Colonic mucosa (tissue), 4 donors: ENCODE measurements at regions of chr12 and their contacts with region 1.

Region 1: DNA sequence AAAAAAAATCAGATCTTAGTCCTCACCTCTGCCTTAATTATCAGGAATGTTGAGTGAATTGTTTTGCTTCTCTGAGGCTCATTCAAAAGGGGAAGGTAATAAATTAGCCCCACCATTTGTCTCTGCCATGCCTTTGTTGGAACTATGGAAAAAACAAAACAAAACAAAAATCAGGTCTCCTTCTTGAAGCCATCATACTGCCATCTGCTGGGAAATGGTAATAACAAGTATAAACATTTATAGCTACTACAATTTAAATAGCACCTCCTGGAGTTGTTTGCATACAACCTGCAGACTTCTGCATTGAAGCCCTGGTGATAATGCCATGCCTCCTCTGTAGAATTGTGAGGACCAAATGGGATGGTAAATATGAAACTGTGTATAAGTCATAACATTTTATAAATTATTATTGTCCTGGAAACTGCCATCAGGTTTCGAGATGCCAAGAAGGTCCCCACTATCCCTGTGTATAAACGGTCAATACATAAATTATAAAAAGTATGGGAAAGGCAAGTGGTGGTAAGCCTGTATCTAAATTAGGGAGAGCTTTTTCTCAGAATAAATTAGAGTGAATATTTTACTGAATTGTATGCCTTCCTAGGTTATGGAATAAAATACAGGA is 87.2 kb upstream of the FGD4 start:
- DNase-seq: no peak
- H3K4me3 ChIP-seq: no peak overlapping the region
- H3K27ac ChIP-seq: no peak overlapping the region
- H3K4me1 ChIP-seq: no peaks in the 10 kb centered on the region
- H3K27me3 ChIP-seq: no peaks in the 10 kb centered on the region
- CTCF ChIP-seq: peak; percentile 33

Region 2: GRCh38 chr12:31650927-31651326 is 661.2 kb before region 1 on chr12:
- intact Hi-C with region 1: loop called (anchors 5 kb)
- DNase-seq: peak; percentile 65
- H3K4me3 ChIP-seq: no peak overlapping the region
- H3K27ac ChIP-seq: peak overlapping the region; percentile 45
- H3K4me1 ChIP-seq: no peaks in the 10 kb centered on the region
- H3K27me3 ChIP-seq: no peaks in the 10 kb centered on the region
- CTCF ChIP-seq: no peak

Region 3: DNA sequence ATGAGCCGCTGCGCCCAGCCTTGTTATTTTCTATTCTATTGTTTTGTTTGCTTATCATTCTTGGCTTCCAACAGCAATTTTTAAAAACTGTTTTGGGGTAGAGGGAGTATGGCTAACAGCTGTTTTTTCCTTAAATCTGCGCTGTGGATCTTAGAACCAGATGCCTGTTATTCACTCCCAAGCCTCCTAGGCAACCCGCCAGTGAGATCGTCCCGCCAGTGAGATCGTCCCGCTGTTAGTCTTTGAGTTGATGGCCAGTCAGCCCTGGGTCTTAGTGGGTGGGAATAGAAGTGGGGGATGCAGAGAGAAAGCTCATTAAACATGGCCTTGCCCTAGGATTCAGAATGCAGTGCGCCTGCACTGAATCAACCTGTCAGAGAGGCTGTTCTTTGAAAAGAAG is 272.8 kb before region 1 on chr12:
- intact Hi-C with region 1: no loop called
- DNase-seq: no peak
- H3K4me3 ChIP-seq: no peak overlapping the region
- H3K27ac ChIP-seq: no peak overlapping the region
- H3K4me1 ChIP-seq: no peaks in the 10 kb centered on the region
- H3K27me3 ChIP-seq: no peaks in the 10 kb centered on the region
- CTCF ChIP-seq: no peak

Region 4: DNA sequence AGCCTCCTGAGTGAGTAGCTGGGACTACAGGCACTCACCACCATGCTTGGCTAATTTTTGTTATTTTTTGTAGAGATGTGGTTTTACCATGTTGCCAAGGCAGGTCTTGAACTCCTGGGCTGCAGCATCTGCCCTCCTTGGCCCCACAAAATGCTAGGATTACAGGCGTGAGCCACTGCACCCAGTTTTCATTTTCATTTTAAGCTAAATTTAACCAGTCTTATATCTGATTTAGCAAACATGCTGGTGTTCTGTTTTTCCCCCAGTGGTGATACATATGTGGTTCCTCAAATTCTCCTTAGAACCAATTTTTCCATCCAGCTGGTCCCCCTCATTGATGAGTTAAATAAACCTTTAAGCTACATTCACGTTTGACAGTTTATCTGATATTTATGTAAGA is 249.3 kb before region 1 on chr12:
- intact Hi-C with region 1: loop called (anchors 5 kb)
- DNase-seq: no peak
- H3K4me3 ChIP-seq: no peak overlapping the region
- H3K27ac ChIP-seq: no peak overlapping the region
- H3K4me1 ChIP-seq: no peaks in the 10 kb centered on the region
- H3K27me3 ChIP-seq: no peaks in the 10 kb centered on the region
- CTCF ChIP-seq: no peak

Region 5: GRCh38 chr12:32821710-32822109 is 509.6 kb after region 1 on chr12:
- intact Hi-C with region 1: no loop called
- DNase-seq: no peak
- H3K4me3 ChIP-seq: no peak overlapping the region
- H3K27ac ChIP-seq: no peak overlapping the region
- H3K4me1 ChIP-seq: no peaks in the 10 kb centered on the region
- H3K27me3 ChIP-seq: no peaks in the 10 kb centered on the region
- CTCF ChIP-seq: no peak